ENCODE measurements at regions of chr5 and their contacts with region 1.

Region 1: DNA sequence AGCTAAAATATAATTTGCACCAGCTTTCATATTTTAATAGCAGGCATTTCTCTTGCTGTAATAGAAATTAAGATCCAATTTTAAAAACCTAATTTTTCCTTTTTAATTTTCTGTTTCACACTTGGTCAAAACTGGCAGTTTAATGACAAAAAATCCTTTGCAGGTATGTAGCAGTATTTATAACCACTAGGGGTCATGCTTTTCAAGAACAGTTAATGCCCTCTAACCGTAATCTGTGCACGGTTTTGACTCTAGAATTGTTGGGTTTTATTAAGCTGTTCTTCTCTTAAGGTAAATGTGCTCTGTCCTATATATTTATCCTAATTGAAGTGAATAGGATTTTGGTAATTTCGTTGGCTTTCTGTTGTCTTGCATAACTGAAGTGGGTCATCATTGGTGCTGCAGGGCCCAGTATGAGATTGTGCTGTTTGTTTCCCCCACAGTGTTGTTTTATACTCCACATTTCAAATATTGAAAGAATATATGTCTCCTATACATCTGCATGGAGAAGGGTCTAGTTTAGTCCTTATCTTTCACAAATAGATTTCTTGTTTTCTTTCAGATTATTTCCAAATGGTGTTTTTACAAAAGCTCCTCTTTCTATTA is 107.4 kb downstream of the SCAMP1 start:
- DNase-seq: peak; percentile 37 to 54
- ATAC-seq: peak; percentile 58 to 86; a peak in 3 of 6 replicates
- H3K4me3 ChIP-seq: no peak overlapping the region
- H3K27ac ChIP-seq: no peak overlapping the region
- H3K4me1 ChIP-seq: 0 out of 3 replicates have a peak, but pooled peaks cover 4% of the 10 kb centered on the region
- CTCF ChIP-seq: peak; percentile 87
- EP300 ChIP-seq: no peak
- POLR2A ChIP-seq: no peak
- RAD21 ChIP-seq: peak; percentile 79 to 81

Region 2: GRCh38 chr5:78178356-78178755 is 289.5 kb before region 1 on chr5:
- CTCF ChIA-PET with region 1: no interaction called
- POLR2A ChIA-PET with region 1: no interaction called
- DNase-seq: no peak
- ATAC-seq: no peak
- H3K4me3 ChIP-seq: no peak overlapping the region
- H3K27ac ChIP-seq: no peak overlapping the region
- H3K4me1 ChIP-seq: no peaks in the 10 kb centered on the region
- CTCF ChIP-seq: no peak
- EP300 ChIP-seq: no peak
- POLR2A ChIP-seq: no peak
- RAD21 ChIP-seq: no peak

Region 3: DNA sequence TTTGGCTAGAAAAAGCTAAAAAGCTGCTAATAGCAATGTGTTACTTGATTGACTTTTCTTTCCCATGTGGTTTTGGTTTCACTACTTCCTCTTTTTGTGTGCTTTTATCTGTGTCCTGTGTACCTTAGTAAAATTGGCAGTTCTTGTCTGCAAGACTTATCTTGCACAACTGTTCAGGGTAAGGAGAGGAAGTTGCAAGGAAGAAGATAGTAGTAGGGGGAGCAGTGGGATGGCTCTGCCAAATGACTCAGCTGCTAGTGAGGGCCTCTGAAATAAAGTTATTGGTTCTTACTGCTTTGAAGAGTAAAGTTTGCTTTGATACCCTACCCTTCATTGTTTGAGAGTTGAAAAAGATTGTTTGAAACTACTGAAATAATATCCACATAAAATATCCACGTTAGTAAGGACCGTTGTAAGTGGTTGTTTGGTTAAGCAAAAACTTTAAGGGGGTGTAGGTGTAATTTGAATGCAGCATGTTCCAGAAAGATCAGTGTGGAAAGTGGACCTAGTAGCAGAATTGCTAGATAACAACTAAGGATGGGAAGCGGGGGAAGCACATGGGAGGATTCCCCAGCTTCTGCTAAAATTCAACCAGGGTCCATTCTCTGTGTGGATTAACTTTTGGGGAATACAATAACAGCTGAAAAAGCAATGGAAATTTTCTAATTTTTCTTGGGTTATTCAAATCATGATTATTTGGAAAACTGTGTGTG is 16.1 kb after region 1 on chr5:
- CTCF ChIA-PET with region 1: interaction called, 10 read pairs
- POLR2A ChIA-PET with region 1: no interaction called
- DNase-seq: peak in 1 of 2 experiments; percentile 20
- ATAC-seq: peak; percentile 43 to 59; a peak in 3 of 6 replicates
- H3K4me3 ChIP-seq: no peak overlapping the region
- H3K27ac ChIP-seq: peak overlapping the region in 1 of 2 experiments; percentile 55; a peak in 3 of 6 replicates
- H3K4me1 ChIP-seq: peaks cover 16% of the 10 kb centered on the region; the same call in 2 of the 3 replicates
- CTCF ChIP-seq: no peak
- EP300 ChIP-seq: no peak
- POLR2A ChIP-seq: no peak
- RAD21 ChIP-seq: no peak

Region 4: DNA sequence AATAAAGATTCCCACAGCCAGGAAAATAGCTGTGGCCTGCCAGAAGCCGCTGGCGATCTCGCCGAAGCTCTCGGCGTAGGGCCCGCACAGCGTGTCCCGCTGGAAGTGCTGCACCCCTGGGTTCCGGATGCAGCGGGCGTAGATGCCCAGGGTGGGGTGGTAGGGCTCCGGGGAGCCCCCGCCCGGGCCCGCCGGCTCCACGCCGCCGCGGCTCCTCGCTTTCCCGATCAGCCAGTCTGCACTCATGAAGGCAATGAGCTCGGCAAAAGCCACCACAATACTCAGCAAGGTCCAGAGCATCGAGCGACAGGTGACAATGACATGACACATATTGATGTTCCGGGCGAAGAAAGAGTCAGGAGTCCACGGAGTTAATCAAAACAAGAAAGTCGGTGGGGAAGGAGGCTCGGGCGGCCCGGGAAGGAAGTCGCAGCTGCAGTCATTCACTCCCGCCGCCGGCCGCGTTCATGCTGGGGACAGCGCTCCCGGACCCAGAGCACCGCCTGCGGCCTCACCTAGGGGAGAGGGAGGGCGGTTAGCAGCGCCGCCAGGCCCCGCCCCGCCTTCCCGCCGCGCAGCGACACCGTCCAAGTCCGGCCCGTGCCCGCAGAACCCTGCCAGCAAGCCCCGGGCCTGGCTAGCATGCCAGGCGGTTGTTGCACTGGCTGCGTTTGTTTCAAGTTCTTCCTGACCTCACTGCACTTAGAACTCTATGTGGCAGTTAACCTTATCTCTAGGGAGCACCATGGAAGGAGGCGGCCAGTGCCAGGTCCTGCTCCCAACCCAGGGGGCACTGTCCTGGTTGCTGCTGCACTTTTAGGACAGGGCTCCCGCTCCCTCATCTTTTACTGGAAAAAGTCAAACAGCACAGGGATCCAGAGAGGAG is 42.3 kb after region 1 on chr5:
- CTCF ChIA-PET with region 1: interaction called, 13 read pairs
- POLR2A ChIA-PET with region 1: no interaction called
- DNase-seq: no peak
- ATAC-seq: no peak
- H3K4me3 ChIP-seq: no peak overlapping the region
- H3K27ac ChIP-seq: no peak overlapping the region
- H3K4me1 ChIP-seq: peaks cover 39% of the 10 kb centered on the region
- CTCF ChIP-seq: no peak
- EP300 ChIP-seq: no peak
- POLR2A ChIP-seq: no peak
- RAD21 ChIP-seq: no peak

Measured in A549 (cell line).